Activated CD4-positive, alpha-beta memory T cell treated with anti-CD3 and anti-CD28 coated beads for 36 hours (primary cell): ENCODE measurements at regions of chr11 and their contacts with region 1.

Region 1: GRCh38 chr11:96235751-96236150 is 107.2 kb downstream of the MAML2 start:
- DNase-seq: peak; percentile 90
- H3K4me3 Mint-ChIP-seq: peak overlapping the region; percentile 58
- H3K27ac Mint-ChIP-seq: peak overlapping the region; percentile 94
- H3K4me1 Mint-ChIP-seq: peaks cover 50% of the 10 kb centered on the region
- H3K27me3 Mint-ChIP-seq: no peaks in the 10 kb centered on the region

Region 2: GRCh38 chr11:95835768-95836488 is 399.8 kb before region 1 on chr11:
- CTCF ChIA-PET with region 1: no interaction called
- POLR2A ChIA-PET with region 1: no interaction called
- intact Hi-C with region 1: loop called (anchors 10 kb)
- DNase-seq: peak; percentile 63
- H3K4me3 Mint-ChIP-seq: no peak overlapping the region
- H3K27ac Mint-ChIP-seq: no peak overlapping the region
- H3K4me1 Mint-ChIP-seq: peaks cover 3% of the 10 kb centered on the region
- H3K27me3 Mint-ChIP-seq: no peaks in the 10 kb centered on the region

Region 3: GRCh38 chr11:95985174-95985808 is 250.5 kb before region 1 on chr11:
- CTCF ChIA-PET with region 1: no interaction called
- POLR2A ChIA-PET with region 1: no interaction called
- intact Hi-C with region 1: no loop called
- DNase-seq: no peak
- H3K4me3 Mint-ChIP-seq: no peak overlapping the region
- H3K27ac Mint-ChIP-seq: no peak overlapping the region
- H3K4me1 Mint-ChIP-seq: no peaks in the 10 kb centered on the region
- H3K27me3 Mint-ChIP-seq: no peaks in the 10 kb centered on the region

Region 4: GRCh38 chr11:96054870-96055705 is 180.7 kb before region 1 on chr11:
- CTCF ChIA-PET with region 1: interaction called, 12 read pairs
- POLR2A ChIA-PET with region 1: no interaction called
- intact Hi-C with region 1: no loop called
- DNase-seq: no peak
- H3K4me3 Mint-ChIP-seq: no peak overlapping the region
- H3K27ac Mint-ChIP-seq: peak overlapping the region; percentile 75
- H3K4me1 Mint-ChIP-seq: peaks cover 82% of the 10 kb centered on the region
- H3K27me3 Mint-ChIP-seq: no peaks in the 10 kb centered on the region

Region 5: GRCh38 chr11:96155627-96156378 is 79.9 kb before region 1 on chr11:
- CTCF ChIA-PET with region 1: interaction called, 3 read pairs
- POLR2A ChIA-PET with region 1: no interaction called
- intact Hi-C with region 1: loop called (anchors 1 kb)
- DNase-seq: peak; percentile 88
- H3K4me3 Mint-ChIP-seq: peak overlapping the region; percentile 42
- H3K27ac Mint-ChIP-seq: peak overlapping the region; percentile 95
- H3K4me1 Mint-ChIP-seq: peaks cover 61% of the 10 kb centered on the region
- H3K27me3 Mint-ChIP-seq: no peaks in the 10 kb centered on the region

Region 6: GRCh38 chr11:96188243-96189006 is 47.3 kb before region 1 on chr11:
- CTCF ChIA-PET with region 1: no interaction called
- POLR2A ChIA-PET with region 1: interaction called, 12 read pairs
- intact Hi-C with region 1: loop called (anchors 1 kb)
- DNase-seq: peak; percentile 59
- H3K4me3 Mint-ChIP-seq: peak overlapping the region; percentile 7
- H3K27ac Mint-ChIP-seq: peak overlapping the region; percentile 79
- H3K4me1 Mint-ChIP-seq: peaks cover 74% of the 10 kb centered on the region
- H3K27me3 Mint-ChIP-seq: no peaks in the 10 kb centered on the region